Kidney (tissue), 22 donors: ENCODE measurements at regions of chr5 and their contacts with region 1.

Region 1: DNA sequence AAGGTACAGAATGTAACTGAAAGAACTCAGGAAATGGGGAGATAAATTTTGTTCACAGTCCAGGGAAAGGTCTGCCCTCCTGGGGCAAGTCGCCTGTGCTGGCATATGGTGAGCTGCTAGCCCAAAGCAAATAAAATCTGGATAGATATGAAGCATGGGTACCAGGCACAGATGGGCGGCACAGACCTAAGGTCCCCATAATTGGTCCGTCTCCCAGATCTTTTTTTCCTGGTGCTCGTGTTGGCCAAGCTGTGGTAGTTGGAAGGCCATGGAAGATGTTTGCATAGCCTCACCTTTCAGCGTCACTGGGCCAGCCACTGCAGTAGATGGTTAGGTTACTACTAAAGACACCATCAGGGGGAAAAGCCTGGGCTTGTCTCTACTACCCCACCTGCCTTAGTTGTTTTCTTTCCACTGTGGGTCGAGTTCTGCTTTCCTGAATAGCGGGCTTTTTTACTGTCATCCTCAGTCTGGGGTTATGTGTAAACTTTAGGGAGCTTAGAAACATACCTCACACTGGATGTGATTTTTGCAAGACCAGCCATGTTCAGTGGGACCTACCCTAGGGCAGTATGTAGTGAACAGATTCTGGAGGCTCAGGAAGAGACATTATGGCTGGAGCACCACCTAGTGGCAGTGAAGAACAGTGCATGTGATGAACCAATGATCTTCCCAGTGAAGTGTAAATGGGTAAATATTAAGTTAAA is 24.2 kb upstream of the GLRX start:
- DNase-seq: peak in 4 of 5 donors; percentile 66 to 87 (median 74)
- H3K4me3 ChIP-seq: no peak overlapping the region
- H3K27ac ChIP-seq: no peak overlapping the region
- H3K4me1 ChIP-seq: peaks cover 0 to 9% (median 7%) of the 10 kb centered on the region in 3 donors
- H3K27me3 ChIP-seq: no peaks in the 10 kb centered on the region
- CTCF ChIP-seq: peak; percentile 97

Region 2: DNA sequence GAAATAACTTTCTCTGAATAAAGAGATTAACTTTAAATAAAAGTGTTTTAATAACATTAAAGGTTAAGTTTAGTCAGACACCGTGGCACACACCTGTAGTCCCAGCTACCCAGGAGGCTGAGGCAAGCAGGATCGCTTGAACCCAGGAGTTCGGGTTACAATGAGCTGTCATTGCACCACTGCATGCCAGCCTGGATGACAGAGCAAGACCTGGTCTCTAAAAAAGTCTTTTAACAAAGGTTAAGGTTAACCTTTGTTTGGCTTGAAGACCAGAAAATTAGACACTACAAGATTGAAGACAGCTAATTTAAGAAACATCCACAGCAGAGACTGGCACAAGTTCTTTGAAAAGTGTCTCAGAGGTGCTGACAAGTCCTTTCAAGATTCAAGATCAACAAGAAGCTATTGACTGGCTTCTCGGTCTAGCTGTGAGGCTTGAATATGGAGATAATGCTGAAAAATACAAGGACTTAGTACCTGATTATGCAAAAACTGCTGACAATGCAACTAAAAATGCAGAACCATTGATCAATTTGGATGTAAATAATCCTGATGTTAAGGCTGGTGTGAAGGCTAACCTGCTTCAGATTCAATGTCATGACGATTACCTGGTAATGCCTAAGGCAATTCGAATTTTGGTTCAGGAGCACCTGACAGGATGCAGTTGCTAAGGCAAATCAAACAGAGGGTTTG is 406.8 kb before region 1 on chr5:
- intact Hi-C with region 1: no loop called
- DNase-seq: no peak
- H3K4me3 ChIP-seq: no peak overlapping the region
- H3K27ac ChIP-seq: no peak overlapping the region
- H3K4me1 ChIP-seq: no peaks in the 10 kb centered on the region
- H3K27me3 ChIP-seq: no peaks in the 10 kb centered on the region
- CTCF ChIP-seq: no peak

Region 3: DNA sequence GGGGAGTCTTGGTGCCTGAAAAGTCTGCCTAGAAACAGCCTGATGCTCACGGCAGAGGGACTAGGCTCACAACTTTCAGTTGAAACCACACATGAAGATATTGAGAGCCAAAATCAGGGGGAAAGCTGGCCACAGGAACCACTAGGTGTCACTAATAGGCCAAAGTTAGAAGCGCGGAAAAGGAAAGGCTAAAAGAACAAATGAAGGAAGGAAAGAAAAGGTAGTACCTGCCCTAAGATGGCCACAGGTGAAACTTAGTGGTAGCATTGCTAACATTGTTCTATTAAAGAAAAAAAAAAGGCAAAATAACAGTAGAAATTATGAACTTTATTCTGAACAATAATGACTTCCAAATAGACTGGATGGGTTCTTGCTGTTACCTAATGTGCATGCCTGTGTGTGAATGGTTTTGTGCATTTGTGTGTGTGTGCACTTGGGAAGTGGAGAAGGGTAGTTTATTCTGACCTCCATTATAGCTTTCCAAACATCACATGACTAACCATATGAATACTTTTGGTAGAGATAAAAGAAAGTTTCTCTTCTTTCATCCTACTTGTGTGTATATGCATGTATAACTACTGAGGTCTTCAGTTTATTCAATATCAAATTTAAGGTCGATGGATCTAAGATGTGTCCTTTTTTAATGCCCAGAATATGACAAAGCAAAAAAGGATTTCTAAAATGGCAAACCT is 202.2 kb before region 1 on chr5:
- intact Hi-C with region 1: loop called (anchors 5 kb)
- DNase-seq: peak in 4 of 5 donors; percentile 25 to 72 (median 60)
- H3K4me3 ChIP-seq: no peak overlapping the region
- H3K27ac ChIP-seq: no peak overlapping the region
- H3K4me1 ChIP-seq: peaks cover 0 to 10% (median 8%) of the 10 kb centered on the region in 3 donors
- H3K27me3 ChIP-seq: no peaks in the 10 kb centered on the region
- CTCF ChIP-seq: peak; percentile 84

Region 4: GRCh38 chr5:95786901-95787300 is 59.8 kb before region 1 on chr5:
- intact Hi-C with region 1: loop called (anchors 5 kb)
- DNase-seq: no peak
- H3K4me3 ChIP-seq: no peak overlapping the region
- H3K27ac ChIP-seq: no peak overlapping the region
- H3K4me1 ChIP-seq: no peaks in the 10 kb centered on the region
- H3K27me3 ChIP-seq: no peaks in the 10 kb centered on the region
- CTCF ChIP-seq: no peak

Region 5: GRCh38 chr5:96503501-96504236 is 657.0 kb after region 1 on chr5:
- intact Hi-C with region 1: no loop called
- DNase-seq: no peak
- H3K4me3 ChIP-seq: no peak overlapping the region
- H3K27ac ChIP-seq: no peak overlapping the region
- H3K4me1 ChIP-seq: no peaks in the 10 kb centered on the region
- H3K27me3 ChIP-seq: no peaks in the 10 kb centered on the region
- CTCF ChIP-seq: no peak